ENCODE measurements at regions of chr2 and their contacts with region 1.

Region 1: GRCh38 chr2:65554765-65555591 is 122.6 kb upstream of the SPRED2 start:
- DNase-seq: peak; percentile 38
- CTCF ChIP-seq: no peak

Region 2: DNA sequence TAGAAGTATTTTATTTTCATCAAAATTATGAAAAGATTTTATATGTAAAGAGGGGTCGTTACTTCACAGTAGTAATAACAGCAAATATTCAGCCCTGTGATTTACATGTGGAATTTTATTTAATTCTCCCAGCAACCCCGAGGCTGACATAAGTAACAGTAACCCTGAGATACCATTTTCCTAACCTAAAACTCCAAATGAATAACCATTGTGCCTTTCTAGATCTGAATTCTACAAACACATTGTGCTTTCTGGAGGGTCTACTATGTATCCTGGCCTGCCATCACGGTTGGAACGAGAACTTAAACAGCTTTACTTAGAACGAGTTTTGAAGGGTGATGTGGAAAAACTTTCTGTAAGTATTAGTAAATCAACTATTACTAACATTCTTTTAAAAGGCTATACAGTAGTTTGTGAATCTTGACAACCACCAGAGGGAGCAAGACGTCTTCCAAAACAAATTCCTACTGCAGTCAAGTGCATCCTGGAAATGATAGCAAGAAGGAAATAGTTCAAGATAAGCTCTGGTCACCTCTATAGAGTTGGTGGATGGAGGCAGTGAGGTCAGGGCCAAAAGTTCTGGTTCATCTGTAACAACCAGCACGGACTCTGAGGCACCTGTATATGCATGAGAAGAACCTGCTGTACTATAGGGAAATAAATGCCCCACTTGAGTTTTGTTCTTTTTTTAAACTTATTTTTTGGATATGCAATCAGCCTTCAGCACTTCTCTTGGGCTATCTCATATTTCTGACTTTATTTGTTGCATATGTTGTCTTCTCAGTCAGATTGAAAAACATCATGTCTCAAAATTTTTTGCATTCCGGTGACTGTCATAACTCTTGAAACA is 289.9 kb before region 1 on chr2:
- in situ Hi-C with region 1: loop called (anchors 5 kb)
- DNase-seq: no peak
- CTCF ChIP-seq: peak; percentile 22

Region 3: DNA sequence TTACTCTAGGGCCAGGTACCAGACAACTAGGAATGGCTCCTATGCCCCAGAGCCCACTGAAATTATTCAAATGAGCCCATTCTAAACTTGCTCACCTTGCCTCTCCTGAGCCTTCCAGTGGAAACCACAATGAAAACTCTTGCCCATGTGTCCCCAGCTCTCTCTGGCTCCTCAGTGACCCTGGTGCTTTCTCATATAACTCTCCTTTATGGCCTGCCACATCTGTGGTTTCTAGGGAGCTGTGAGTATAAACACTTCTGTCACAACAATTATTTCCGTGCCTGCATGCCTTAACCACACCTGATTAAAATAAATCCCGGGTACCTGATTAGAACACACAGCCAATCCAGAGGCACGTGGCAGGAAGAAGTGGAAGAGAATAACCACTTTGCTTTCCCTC is 210.4 kb after region 1 on chr2:
- in situ Hi-C with region 1: no loop called
- DNase-seq: no peak
- CTCF ChIP-seq: no peak